CD4-positive, alpha-beta memory T cell (primary cell): ENCODE measurements at regions of chr13 and their contacts with region 1.

Region 1: GRCh38 chr13:50081679-50082425 is 66.6 kb downstream of the KCNRG start:
- DNase-seq: peak; percentile 98 to 99 (median 99)
- H3K4me3 ChIP-seq: peak overlapping the region; percentile 85 to 87
- H3K4me3 Mint-ChIP-seq: peak overlapping the region; percentile 96 to 100 (median 99)
- H3K27ac ChIP-seq: peak overlapping the region; percentile 89
- H3K27ac Mint-ChIP-seq: peak overlapping the region; percentile 93 to 100 (median 98)
- H3K4me1 ChIP-seq: peaks cover 54% of the 10 kb centered on the region
- H3K4me1 Mint-ChIP-seq: peaks cover 23 to 62% (median 37%) of the 10 kb centered on the region in 4 donors
- H3K27me3 ChIP-seq: no peaks in the 10 kb centered on the region
- H3K27me3 Mint-ChIP-seq: peaks cover 0 to 6% of the 10 kb centered on the region in 2 donors

Region 2: DNA sequence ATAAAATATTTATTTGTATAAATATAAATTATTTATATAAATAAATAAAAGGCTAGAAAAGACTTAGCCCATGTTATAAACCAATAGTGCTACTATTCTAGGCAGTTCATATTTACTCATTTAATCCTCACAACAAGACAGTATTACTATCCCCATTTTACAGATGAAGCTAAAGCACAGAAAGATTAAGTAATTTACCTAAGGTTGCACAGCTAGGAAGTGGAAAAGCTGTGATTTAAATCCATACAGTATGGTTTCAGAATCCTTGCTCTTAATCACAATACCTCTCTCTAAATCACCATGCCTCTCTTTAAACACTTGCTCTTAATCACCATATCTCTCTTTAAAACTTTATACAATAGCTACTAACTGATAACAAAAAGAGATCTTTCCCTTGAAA is 159.6 kb before region 1 on chr13:
- CTCF ChIA-PET with region 1: no interaction called
- POLR2A ChIA-PET with region 1: no interaction called
- intact Hi-C with region 1: no loop called
- DNase-seq: no peak
- H3K4me3 ChIP-seq: no peak overlapping the region
- H3K4me3 Mint-ChIP-seq: no peak overlapping the region
- H3K27ac ChIP-seq: no peak overlapping the region
- H3K27ac Mint-ChIP-seq: no peak overlapping the region
- H3K4me1 ChIP-seq: no peaks in the 10 kb centered on the region
- H3K4me1 Mint-ChIP-seq: no peaks in the 10 kb centered on the region
- H3K27me3 ChIP-seq: no peaks in the 10 kb centered on the region
- H3K27me3 Mint-ChIP-seq: no peaks in the 10 kb centered on the region

Region 3: GRCh38 chr13:49976314-49977258 is 105.3 kb before region 1 on chr13:
- CTCF ChIA-PET with region 1: interaction called, 8 read pairs
- POLR2A ChIA-PET with region 1: interaction called, 4 read pairs
- intact Hi-C with region 1: loop called (anchors 1 kb)
- DNase-seq: peak; percentile 68 to 75 (median 71)
- H3K4me3 ChIP-seq: no peak overlapping the region
- H3K4me3 Mint-ChIP-seq: no peak overlapping the region
- H3K27ac ChIP-seq: no peak overlapping the region
- H3K27ac Mint-ChIP-seq: no peak overlapping the region
- H3K4me1 ChIP-seq: no peaks in the 10 kb centered on the region
- H3K4me1 Mint-ChIP-seq: peaks cover 0 to 5% (median 3%) of the 10 kb centered on the region in 4 donors
- H3K27me3 ChIP-seq: no peaks in the 10 kb centered on the region
- H3K27me3 Mint-ChIP-seq: no peaks in the 10 kb centered on the region

Region 4: DNA sequence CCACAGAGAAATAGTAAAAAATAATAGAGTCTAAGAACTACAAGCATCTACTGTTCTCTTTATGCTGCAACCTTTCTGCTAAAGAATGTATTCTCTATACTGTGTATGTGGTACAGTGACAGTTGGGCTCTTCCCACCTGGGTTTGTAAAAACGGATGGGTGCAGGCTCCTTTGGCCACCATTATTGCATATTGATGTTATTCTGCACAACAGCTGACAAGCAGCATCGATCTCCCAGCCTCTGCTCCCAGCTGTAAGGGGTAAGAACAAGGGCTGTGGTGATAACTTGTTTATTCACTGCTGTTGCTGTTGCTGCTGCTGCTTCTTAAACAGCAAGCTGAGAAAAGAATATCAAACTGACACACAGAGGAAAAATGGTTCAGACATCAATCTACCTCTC is 10.5 kb before region 1 on chr13:
- CTCF ChIA-PET with region 1: interaction called, 6 read pairs
- POLR2A ChIA-PET with region 1: interaction called, 22 read pairs
- intact Hi-C with region 1: no loop called
- DNase-seq: no peak
- H3K4me3 ChIP-seq: no peak overlapping the region
- H3K4me3 Mint-ChIP-seq: peak overlapping the region in 4 of 8 donors; percentile 11 to 56 (median 36)
- H3K27ac ChIP-seq: no peak overlapping the region
- H3K27ac Mint-ChIP-seq: peak overlapping the region in 2 of 7 donors; percentile 28 to 34
- H3K4me1 ChIP-seq: peaks cover 51% of the 10 kb centered on the region
- H3K4me1 Mint-ChIP-seq: peaks cover 16 to 43% (median 19%) of the 10 kb centered on the region in 4 donors
- H3K27me3 ChIP-seq: no peaks in the 10 kb centered on the region
- H3K27me3 Mint-ChIP-seq: no peaks in the 10 kb centered on the region

Region 5: GRCh38 chr13:50222569-50223332 is 140.9 kb after region 1 on chr13:
- CTCF ChIA-PET with region 1: no interaction called
- POLR2A ChIA-PET with region 1: interaction called, 13 read pairs
- intact Hi-C with region 1: no loop called
- DNase-seq: peak; percentile 15 to 57 (median 21)
- H3K4me3 ChIP-seq: no peak overlapping the region
- H3K4me3 Mint-ChIP-seq: peak overlapping the region; percentile 52 to 85 (median 78)
- H3K27ac ChIP-seq: no peak overlapping the region
- H3K27ac Mint-ChIP-seq: peak overlapping the region in 6 of 7 donors; percentile 40 to 95 (median 84)
- H3K4me1 ChIP-seq: peaks cover 36% of the 10 kb centered on the region
- H3K4me1 Mint-ChIP-seq: peaks cover 30 to 53% (median 44%) of the 10 kb centered on the region in 4 donors
- H3K27me3 ChIP-seq: no peaks in the 10 kb centered on the region
- H3K27me3 Mint-ChIP-seq: peaks cover 2 to 5% of the 10 kb centered on the region in 2 donors

Region 6: DNA sequence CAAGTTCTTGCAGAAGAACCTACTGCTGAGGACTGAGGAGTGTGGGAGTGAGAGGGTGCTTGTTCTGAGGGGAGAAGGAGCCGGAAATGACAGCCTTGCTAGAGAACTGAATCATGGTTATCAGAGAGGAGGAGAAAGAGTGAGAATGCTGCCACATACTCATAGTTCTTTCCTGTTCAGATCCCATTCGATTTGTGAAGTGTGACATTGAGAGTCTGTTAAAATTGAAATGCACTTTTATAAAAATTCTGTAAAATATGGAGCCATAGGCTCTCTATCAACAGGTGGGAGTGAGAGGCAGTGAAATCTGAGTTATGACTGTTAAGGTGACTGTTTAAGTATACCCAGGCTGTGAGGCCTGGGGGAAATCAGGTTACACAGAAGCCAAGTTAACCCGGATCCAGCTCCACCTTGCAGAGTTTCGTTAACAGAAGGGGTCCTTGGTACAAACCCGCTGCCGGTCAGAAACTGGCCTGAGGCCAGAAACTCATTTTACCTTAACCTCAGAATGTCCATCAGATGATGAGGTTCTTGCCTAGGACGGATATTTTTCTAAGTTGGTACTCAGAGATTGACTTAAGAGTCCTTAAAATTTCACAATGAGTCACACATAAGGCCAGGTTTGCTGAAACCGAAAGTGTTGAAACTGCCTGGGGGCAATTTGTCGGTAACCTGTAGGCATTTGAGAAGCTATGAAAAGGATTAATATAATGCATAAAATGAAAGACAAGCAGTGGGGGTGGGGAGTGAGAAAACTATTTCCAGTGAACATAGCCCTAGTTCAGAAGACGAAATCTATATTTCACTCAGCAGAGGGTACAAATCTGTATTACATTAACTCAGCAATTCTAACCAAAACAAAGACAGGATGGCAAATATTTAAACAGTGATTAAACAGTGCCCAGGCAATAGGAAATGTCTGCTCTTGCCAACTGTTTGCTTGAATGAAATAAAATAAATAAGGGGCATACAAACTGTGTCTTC is 283.8 kb after region 1 on chr13:
- CTCF ChIA-PET with region 1: no interaction called
- POLR2A ChIA-PET with region 1: interaction called, 7 read pairs
- intact Hi-C with region 1: loop called (anchors 5 kb)
- DNase-seq: peak; percentile 49 to 69 (median 57)
- H3K4me3 ChIP-seq: peak overlapping the region; percentile 36 to 37
- H3K4me3 Mint-ChIP-seq: peak overlapping the region; percentile 77 to 87 (median 83)
- H3K27ac ChIP-seq: peak overlapping the region; percentile 68
- H3K27ac Mint-ChIP-seq: peak overlapping the region; percentile 93 to 97 (median 96)
- H3K4me1 ChIP-seq: peaks cover 43% of the 10 kb centered on the region
- H3K4me1 Mint-ChIP-seq: peaks cover 49 to 61% (median 55%) of the 10 kb centered on the region in 4 donors
- H3K27me3 ChIP-seq: no peaks in the 10 kb centered on the region
- H3K27me3 Mint-ChIP-seq: peaks cover 0 to 2% of the 10 kb centered on the region in 2 donors

Region 7: DNA sequence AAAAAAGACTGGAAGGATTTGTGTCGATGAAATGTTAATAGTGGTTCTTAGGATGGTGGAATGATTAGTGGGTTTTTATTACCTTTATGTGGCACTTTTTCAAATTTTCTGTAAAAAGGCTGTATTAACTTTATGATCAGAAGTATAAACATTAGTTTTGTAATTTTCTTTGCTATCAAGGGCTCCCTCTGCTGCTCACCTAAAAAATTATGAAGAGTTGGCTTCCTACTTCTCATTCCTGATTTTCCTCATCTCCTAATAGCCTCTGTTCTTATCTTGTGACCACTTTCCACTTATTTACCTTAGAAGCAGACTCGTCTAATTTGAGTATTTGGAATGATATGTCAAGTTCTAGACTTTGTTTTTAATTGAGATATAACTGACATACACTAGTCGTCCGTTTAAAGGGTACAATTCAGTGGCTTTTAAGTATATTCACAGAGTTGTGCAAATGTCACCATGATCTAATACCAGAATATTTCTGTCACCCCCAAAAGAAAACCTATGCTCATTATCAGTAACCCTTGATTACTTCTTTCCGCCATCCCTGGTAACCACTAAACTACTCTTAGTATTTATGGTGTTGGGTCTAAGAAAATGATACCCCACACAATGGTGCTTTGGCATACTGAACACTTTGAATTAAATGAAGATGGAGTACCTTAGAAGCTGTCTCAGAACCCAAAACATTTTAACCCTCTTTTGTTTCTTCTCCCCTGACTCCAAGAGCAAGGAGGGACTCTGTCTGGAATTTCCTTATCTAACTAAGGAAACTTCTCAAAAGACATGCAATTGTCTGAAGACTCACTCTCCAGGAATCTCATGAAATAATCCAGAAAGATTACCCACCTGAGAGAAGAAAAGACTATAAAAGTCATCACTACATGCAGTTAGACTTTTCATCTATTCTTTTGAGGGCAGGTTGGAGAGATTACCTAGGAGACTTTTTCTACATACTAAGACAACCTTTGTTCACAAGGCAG is 450.4 kb after region 1 on chr13:
- CTCF ChIA-PET with region 1: interaction called, 3 read pairs
- POLR2A ChIA-PET with region 1: no interaction called
- intact Hi-C with region 1: loop called (anchors 2 kb)
- DNase-seq: peak in 2 of 5 donors; percentile 14 to 18
- H3K4me3 ChIP-seq: no peak overlapping the region
- H3K4me3 Mint-ChIP-seq: no peak overlapping the region
- H3K27ac ChIP-seq: no peak overlapping the region
- H3K27ac Mint-ChIP-seq: no peak overlapping the region
- H3K4me1 ChIP-seq: peaks cover 18% of the 10 kb centered on the region
- H3K4me1 Mint-ChIP-seq: peaks cover 11 to 26% (median 22%) of the 10 kb centered on the region in 4 donors
- H3K27me3 ChIP-seq: no peaks in the 10 kb centered on the region
- H3K27me3 Mint-ChIP-seq: no peaks in the 10 kb centered on the region

Region 8: GRCh38 chr13:50911937-50912795 is 830.3 kb after region 1 on chr13:
- CTCF ChIA-PET with region 1: interaction called, 35 read pairs
- POLR2A ChIA-PET with region 1: interaction called, 13 read pairs
- intact Hi-C with region 1: loop called (anchors 1 kb)
- DNase-seq: peak; percentile 82 to 90 (median 83)
- H3K4me3 ChIP-seq: peak overlapping the region; percentile 73 to 92
- H3K4me3 Mint-ChIP-seq: peak overlapping the region; percentile 82 to 98 (median 94)
- H3K27ac ChIP-seq: peak overlapping the region; percentile 79
- H3K27ac Mint-ChIP-seq: peak overlapping the region; percentile 89 to 98 (median 95)
- H3K4me1 ChIP-seq: peaks cover 69% of the 10 kb centered on the region
- H3K4me1 Mint-ChIP-seq: peaks cover 43 to 59% (median 50%) of the 10 kb centered on the region in 4 donors
- H3K27me3 ChIP-seq: no peaks in the 10 kb centered on the region
- H3K27me3 Mint-ChIP-seq: peaks cover 0 to under 1% of the 10 kb centered on the region in 2 donors